ENCODE measurements at regions of chr12 and their contacts with region 1.

Region 1: DNA sequence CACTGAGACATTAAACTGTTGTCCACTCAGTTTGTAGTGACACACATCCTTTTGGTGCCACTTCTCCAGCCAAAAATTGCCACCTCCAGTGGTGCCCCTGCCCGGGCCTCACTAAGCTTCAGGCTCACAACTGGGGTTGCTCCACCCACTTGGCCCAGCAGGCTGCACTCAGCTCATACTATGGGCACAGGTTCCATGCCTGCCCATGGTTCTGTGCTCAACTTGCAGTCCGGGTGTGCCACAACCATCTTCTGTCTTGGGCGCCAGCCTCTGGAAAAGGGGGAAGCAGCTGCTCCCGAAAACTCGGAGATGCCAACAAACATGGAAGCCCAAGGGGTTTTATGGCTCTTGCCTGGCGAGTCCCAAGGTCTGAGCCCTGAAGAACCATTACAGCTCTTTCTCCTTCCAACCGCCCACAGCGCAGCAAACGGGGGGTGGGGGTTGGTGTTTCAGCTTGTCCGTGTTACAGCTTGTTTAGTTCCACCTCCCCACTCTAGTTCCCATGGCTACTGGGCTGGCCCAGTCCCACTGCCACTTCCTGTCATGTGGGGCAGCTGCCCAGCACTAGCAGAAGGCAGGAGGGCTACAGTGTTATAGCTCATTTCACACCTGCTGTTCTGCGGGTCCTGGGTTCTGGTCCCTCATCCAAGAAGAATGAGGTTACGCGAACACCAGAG is 998.3 kb downstream of the SLC16A7 start:
- DNase-seq: no peak
- H3K4me3 ChIP-seq: no peak overlapping the region
- H3K27ac ChIP-seq: no peak overlapping the region
- H3K4me1 ChIP-seq: no peaks in the 10 kb centered on the region
- H3K27me3 ChIP-seq: no peaks in the 10 kb centered on the region
- CTCF ChIP-seq: no peak

Region 2: GRCh38 chr12:60494244-60494643 is 99.9 kb before region 1 on chr12:
- dilution Hi-C with region 1: no loop called
- DNase-seq: no peak
- H3K4me3 ChIP-seq: no peak overlapping the region
- H3K27ac ChIP-seq: no peak overlapping the region
- H3K4me1 ChIP-seq: no peaks in the 10 kb centered on the region
- H3K27me3 ChIP-seq: no peaks in the 10 kb centered on the region
- CTCF ChIP-seq: peak in 2 of 3 experiments; percentile 58 to 66

Region 3: DNA sequence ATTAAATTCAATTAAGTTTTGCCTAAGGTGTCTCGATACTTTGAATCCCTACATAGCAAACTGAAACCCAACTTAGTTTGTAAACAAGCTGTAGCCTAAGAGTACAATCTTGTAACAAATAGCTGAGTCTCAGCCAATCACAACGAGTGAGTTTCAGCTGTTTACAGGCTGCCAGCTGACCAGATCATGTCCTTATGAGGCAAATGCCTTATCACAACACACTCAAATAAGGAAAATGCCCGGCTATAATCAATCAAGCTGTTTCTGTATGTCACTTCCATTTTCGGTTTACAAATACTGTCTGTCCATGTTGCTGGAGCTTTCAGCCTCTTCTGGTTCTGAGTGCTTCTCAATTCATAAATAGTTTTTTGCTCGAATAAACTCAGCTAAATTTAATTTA is 54.6 kb before region 1 on chr12:
- dilution Hi-C with region 1: loop called (anchors 10 kb)
- DNase-seq: no peak
- H3K4me3 ChIP-seq: no peak overlapping the region
- H3K27ac ChIP-seq: no peak overlapping the region
- H3K4me1 ChIP-seq: no peaks in the 10 kb centered on the region
- H3K27me3 ChIP-seq: no peaks in the 10 kb centered on the region
- CTCF ChIP-seq: no peak